ENCODE measurements at regions of chrX and their contacts with region 1.

Region 1: DNA sequence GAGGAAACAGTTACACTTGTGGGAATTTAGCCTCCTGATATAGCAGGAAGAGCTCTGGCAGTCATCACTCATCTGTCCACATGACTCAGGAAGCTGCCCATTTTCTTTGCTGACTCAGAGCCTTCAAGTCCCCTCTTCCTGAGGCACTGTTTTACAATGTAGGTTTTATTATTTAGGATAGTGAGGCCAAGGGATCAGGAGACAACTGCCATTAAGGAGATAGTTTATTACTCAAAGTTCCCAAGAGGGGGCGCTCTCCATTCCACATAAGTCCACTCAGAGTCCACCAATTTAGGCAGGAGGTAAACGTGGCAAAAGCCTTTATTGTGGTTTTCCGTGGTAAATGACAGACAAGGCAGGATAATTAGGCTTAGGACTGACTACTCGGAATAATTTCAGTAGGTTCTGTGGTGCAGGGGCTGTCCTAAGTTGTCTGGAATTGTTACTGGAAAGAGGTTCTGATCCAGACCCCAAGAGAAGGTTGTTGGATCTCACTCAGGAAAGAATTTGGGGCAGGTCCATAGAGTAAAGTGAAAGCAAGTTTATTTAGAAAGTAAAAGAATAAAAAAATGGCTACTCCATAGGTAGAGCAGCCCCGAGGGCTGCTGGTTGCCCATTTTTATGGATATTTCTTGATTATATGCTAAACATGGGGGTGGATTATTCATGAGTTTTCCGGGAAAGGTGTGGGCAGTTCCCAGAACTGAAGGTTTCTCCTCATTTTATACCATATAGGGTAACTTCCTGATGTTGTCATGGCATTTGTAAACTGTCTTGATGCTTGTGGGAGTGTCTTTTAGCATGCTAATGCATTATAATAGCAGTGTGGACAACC is 96.0 kb upstream of the RAB40AL start:
- DNase-seq: no peak
- ATAC-seq: no peak
- H3K4me3 ChIP-seq: no peak overlapping the region
- H3K27ac ChIP-seq: no peak overlapping the region
- H3K4me1 ChIP-seq: no peaks in the 10 kb centered on the region
- H3K27me3 ChIP-seq: no peaks in the 10 kb centered on the region
- CTCF ChIP-seq: peak in 2 of 3 experiments; percentile 27 to 49; a peak in 3 of 6 replicates
- POLR2A ChIP-seq: no peak
- RAD21 ChIP-seq: no peak

Region 2: DNA sequence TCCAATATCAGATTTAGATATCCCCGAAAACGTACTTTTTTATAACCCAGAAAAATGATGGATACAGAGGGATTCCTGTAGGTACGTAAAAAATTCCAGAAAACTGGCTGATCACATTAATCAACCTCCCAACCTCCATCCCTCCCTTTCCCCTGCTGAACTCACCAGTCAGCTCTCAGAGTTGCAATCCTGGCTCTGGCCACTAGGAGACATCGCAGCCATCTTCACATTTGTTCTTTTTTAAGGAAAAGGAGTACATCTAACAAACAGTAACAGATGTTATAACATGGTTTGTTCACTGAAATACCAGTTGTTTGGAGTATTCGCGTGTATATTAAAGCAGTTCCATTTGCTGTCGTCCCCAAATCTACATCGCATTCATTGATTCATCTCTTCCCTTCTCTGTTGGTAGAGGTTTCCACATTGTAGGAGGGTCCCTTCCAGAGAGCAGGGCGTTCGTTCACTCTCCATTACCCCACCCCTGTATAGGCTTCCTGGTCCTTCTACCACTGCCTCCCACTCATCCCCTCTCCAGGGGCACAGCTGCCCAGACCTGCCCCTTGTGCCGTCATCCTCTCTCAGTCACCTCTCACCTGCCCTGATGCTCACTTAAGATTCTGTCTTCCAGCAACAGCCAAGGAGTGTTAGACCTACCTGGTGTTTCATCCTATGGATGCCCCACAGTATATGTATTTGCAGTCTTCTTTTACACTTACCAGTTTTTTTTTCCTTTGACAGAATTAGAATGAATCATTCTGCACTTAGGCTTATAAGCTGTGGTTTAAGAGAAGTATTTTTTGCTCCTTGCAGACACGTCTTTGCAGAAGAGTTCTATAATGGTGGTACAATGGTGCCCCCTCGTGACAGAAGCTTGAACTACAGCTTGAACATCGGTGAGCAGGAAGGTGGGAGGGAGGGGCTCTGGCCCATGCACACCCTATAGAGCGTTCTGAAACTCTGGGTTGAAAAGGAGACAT is 59.1 kb after region 1 on chrX:
- CTCF ChIA-PET with region 1: no interaction called
- POLR2A ChIA-PET with region 1: no interaction called
- RAD21 ChIA-PET with region 1: no interaction called
- intact Hi-C with region 1: loop called (anchors 10 kb)
- DNase-seq: peak; percentile 27
- ATAC-seq: peak; percentile 84
- H3K4me3 ChIP-seq: no peak overlapping the region
- H3K27ac ChIP-seq: no peak overlapping the region
- H3K4me1 ChIP-seq: no peaks in the 10 kb centered on the region
- H3K27me3 ChIP-seq: no peaks in the 10 kb centered on the region
- CTCF ChIP-seq: peak; percentile 41 to 62 (median 58); a peak in 5 of 6 replicates
- POLR2A ChIP-seq: no peak
- RAD21 ChIP-seq: peak; percentile 49

Region 3: GRCh38 chrX:103081051-103081450 is 240.0 kb after region 1 on chrX:
- CTCF ChIA-PET with region 1: no interaction called
- POLR2A ChIA-PET with region 1: no interaction called
- RAD21 ChIA-PET with region 1: no interaction called
- intact Hi-C with region 1: no loop called
- DNase-seq: no peak
- ATAC-seq: no peak
- H3K4me3 ChIP-seq: no peak overlapping the region
- H3K27ac ChIP-seq: no peak overlapping the region
- H3K4me1 ChIP-seq: no peaks in the 10 kb centered on the region
- H3K27me3 ChIP-seq: no peaks in the 10 kb centered on the region
- CTCF ChIP-seq: no peak
- POLR2A ChIP-seq: no peak
- RAD21 ChIP-seq: no peak